GM12878 (cell line): ENCODE measurements at regions of chr12 and their contacts with region 1.

Region 1: GRCh38 chr12:8890313-8891085 is 23.8 kb upstream of the PHC1 start:
- DNase-seq: peak; percentile 8
- ATAC-seq: peak; percentile 72
- H3K4me3 ChIP-seq: peak overlapping the region; percentile 75
- H3K27ac ChIP-seq: no peak overlapping the region
- H3K4me1 ChIP-seq: no peaks in the 10 kb centered on the region; the same call in 1 of the 2 replicates
- H3K27me3 ChIP-seq: no peaks in the 10 kb centered on the region
- CTCF ChIP-seq: peak; percentile 80 to 85 (median 82)
- EP300 ChIP-seq: 0 out of 4 replicates have a peak, but pooled peaks of 1 of the 2 experiments have one; percentile 15
- POLR2A ChIP-seq: no peak
- RAD21 ChIP-seq: peak; percentile 91

Region 2: DNA sequence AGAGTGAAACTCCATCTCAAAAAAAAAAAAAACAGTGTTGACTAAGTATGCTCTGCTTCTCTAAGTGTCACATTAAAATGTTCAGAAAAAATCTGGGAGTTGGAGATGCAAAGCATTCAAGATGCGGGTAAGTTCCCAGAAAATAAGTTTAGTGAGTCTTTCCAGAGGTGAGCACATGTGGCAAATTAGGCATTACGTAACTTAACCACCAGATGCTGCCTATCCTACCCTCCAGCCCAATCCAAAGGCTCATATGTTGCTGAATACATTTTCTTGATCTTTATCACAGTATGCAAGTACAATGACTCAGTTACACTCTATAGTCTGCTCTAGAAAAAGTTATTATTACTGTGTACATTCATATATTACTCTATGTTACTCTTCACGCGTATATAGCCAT is 1021.4 kb before region 1 on chr12:
- CTCF ChIA-PET with region 1: no interaction called
- POLR2A ChIA-PET with region 1: no interaction called
- RAD21 ChIA-PET with region 1: no interaction called
- SMC1A ChIA-PET with region 1: no interaction called
- in situ Hi-C with region 1: no loop called
- intact Hi-C with region 1: no loop called
- DNase-seq: no peak
- ATAC-seq: no peak
- H3K4me3 ChIP-seq: no peak overlapping the region
- H3K27ac ChIP-seq: no peak overlapping the region
- H3K4me1 ChIP-seq: no peaks in the 10 kb centered on the region
- H3K27me3 ChIP-seq: no peaks in the 10 kb centered on the region; a peak in 2 of 4 replicates
- CTCF ChIP-seq: no peak
- EP300 ChIP-seq: no peak
- POLR2A ChIP-seq: no peak
- RAD21 ChIP-seq: no peak

Region 3: GRCh38 chr12:8590842-8591550 is 299.5 kb before region 1 on chr12:
- CTCF ChIA-PET with region 1: interaction called, 10 read pairs
- POLR2A ChIA-PET with region 1: no interaction called
- RAD21 ChIA-PET with region 1: no interaction called
- SMC1A ChIA-PET with region 1: no interaction called
- in situ Hi-C with region 1: no loop called
- intact Hi-C with region 1: no loop called
- DNase-seq: no peak
- ATAC-seq: peak; percentile 99
- H3K4me3 ChIP-seq: 0 out of 2 replicates have a peak overlapping the region, but pooled peaks have one; percentile 36
- H3K27ac ChIP-seq: no peak overlapping the region
- H3K4me1 ChIP-seq: peaks cover 3% of the 10 kb centered on the region; the same call in 1 of the 2 replicates
- H3K27me3 ChIP-seq: no peaks in the 10 kb centered on the region
- CTCF ChIP-seq: peak; percentile 18 to 25 (median 23); a peak in 2 of 6 replicates
- EP300 ChIP-seq: no peak
- POLR2A ChIP-seq: no peak
- RAD21 ChIP-seq: no peak

Region 4: DNA sequence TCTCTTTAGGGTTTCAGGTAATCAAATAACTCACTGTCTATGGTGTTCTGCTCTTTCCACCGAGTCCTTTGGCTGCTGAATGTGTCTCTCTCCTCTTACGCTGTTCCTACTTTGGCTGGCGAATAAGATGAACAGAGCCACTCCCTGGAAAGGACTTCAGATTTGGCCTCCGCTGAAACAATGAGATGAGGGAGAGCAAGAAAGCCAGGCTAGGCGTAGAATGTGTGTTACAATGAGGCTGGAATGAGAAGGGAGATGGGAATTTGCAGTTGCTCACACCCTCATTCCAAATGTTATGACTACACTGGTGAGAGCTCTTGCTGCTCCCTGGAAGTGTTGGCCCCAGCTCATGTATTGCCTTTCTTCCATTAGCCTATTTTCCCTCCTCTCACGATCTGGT is 227.9 kb before region 1 on chr12 and contains the start of gene MFAP5:
- CTCF ChIA-PET with region 1: interaction called, 48 read pairs
- POLR2A ChIA-PET with region 1: interaction called, 5 read pairs
- RAD21 ChIA-PET with region 1: interaction called, 31 read pairs
- SMC1A ChIA-PET with region 1: interaction called, 30 read pairs
- in situ Hi-C with region 1: no loop called
- intact Hi-C with region 1: loop called (anchors 1 kb)
- DNase-seq: no peak
- ATAC-seq: no peak
- H3K4me3 ChIP-seq: no peak within 1 kb of the TSS
- H3K27ac ChIP-seq: no peak within 1 kb of the TSS
- H3K4me1 ChIP-seq: no peaks in the 10 kb centered on the region
- H3K27me3 ChIP-seq: peaks cover 0 to 5% of the 10 kb centered on the region in 2 experiments; a peak in 2 of 4 replicates
- CTCF ChIP-seq: no peak
- EP300 ChIP-seq: no peak
- POLR2A ChIP-seq: no peak
- RAD21 ChIP-seq: no peak
- polyA plus RNA-seq, gene MFAP5: not detected

Region 5: DNA sequence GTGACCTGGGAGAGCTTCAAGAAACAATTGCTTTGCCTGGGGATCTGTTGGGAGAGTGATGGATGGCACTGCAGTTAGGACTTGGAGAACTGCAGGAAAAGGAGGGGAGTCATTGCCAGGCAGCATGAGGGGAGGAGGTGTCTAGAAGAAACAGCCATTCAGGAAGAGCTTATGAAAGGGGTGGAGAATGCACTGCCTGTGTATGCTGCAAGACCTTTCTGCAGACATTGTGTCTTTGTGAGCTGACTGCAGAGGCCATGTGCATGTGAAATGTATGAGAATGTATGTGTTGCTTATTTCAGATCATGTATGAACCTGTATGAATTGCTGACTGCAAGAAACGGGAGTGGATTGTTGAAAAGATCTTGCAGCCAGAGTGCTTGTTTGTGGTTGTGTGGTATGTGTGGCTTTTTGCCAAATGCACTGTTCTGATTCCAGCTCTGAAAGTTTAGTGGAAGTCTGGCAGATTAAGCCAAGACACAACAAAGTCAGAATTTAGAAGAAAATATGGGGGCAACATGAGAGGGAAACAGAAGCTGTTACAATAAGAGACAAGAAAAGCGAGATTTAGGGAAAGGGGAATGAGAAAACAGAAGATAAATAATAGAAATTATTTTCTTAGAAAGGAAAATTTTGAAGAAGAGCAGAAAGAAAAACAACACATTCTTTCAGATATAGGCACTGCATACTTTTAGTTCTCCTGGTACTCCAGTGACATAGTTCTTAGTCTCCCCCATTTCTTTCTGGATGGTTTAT is 202.5 kb before region 1 on chr12:
- CTCF ChIA-PET with region 1: interaction called, 30 read pairs
- POLR2A ChIA-PET with region 1: no interaction called
- RAD21 ChIA-PET with region 1: interaction called, 4 read pairs
- SMC1A ChIA-PET with region 1: interaction called, 12 read pairs
- in situ Hi-C with region 1: loop called (anchors 10 kb)
- intact Hi-C with region 1: no loop called
- DNase-seq: no peak
- ATAC-seq: no peak
- H3K4me3 ChIP-seq: no peak overlapping the region
- H3K27ac ChIP-seq: no peak overlapping the region
- H3K4me1 ChIP-seq: no peaks in the 10 kb centered on the region
- H3K27me3 ChIP-seq: peaks cover 0 to 3% of the 10 kb centered on the region in 2 experiments; a peak in 3 of 4 replicates
- CTCF ChIP-seq: no peak
- EP300 ChIP-seq: no peak
- POLR2A ChIP-seq: no peak
- RAD21 ChIP-seq: no peak

Region 6: GRCh38 chr12:9039397-9039977 is 149.0 kb after region 1 on chr12:
- CTCF ChIA-PET with region 1: interaction called, 20 read pairs
- POLR2A ChIA-PET with region 1: no interaction called
- RAD21 ChIA-PET with region 1: interaction called, 3 read pairs
- SMC1A ChIA-PET with region 1: interaction called, 7 read pairs
- in situ Hi-C with region 1: no loop called
- intact Hi-C with region 1: loop called (anchors 2 kb)
- DNase-seq: no peak
- ATAC-seq: peak; percentile 78
- H3K4me3 ChIP-seq: no peak overlapping the region
- H3K27ac ChIP-seq: no peak overlapping the region
- H3K4me1 ChIP-seq: no peaks in the 10 kb centered on the region
- H3K27me3 ChIP-seq: no peaks in the 10 kb centered on the region
- CTCF ChIP-seq: peak; percentile 64 to 79 (median 74)
- EP300 ChIP-seq: no peak
- POLR2A ChIP-seq: no peak
- RAD21 ChIP-seq: peak; percentile 87